ENCODE measurements at regions of chr22 and their contacts with region 1.

Region 1: GRCh38 chr22:43412808-43413795 is 1.3 kb downstream of the MPPED1 start:
- DNase-seq: no peak
- H3K4me3 ChIP-seq: no peak overlapping the region
- H3K27ac ChIP-seq: no peak overlapping the region
- H3K4me1 ChIP-seq: no peaks in the 10 kb centered on the region
- H3K27me3 ChIP-seq: peaks cover 90% of the 10 kb centered on the region
- CTCF ChIP-seq: no peak

Region 2: DNA sequence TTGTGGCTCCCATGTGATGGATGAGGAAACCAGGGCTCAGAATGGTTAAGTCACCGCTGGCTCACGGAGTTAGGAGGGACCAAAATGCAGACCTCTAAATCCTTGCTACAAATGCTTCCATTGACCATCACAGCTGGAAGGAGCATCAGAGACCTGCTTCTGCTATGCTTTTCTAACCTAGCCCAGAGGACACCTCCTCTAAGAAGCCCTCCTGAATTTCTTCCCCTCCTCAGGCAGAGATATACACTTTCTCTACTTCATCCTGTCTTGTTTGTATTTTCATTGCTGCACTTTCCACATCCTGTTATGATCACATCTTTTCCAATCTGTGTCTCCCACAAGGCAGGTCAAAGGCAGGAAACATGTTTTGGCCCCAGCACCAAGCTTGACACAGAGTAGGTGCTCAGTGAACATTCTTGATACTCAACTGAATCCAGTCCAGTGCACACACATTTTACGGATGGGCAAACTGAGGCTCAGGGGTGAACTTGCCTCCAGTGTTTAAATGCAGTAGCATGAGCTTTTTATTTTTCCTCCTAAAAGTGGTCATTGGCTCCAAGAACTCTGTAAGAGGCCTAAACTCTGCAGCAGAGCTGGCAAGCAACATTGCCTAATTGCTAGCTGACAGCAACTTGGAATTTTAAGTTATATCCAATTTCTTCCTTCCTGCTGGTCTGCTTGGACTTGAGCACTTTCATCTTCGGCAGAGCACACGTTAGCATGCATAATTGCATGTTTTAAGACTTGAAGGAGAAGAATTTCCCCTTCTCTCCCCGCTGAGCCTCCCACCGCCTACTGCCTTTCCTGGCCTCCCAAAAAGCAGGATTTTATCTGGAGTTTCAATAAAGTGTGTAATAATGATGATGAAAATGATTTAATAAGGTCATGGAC is 82.7 kb before region 1 on chr22:
- CTCF ChIA-PET with region 1: no interaction called
- POLR2A ChIA-PET with region 1: no interaction called
- intact Hi-C with region 1: no loop called
- DNase-seq: no peak
- H3K4me3 ChIP-seq: no peak overlapping the region
- H3K27ac ChIP-seq: no peak overlapping the region
- H3K4me1 ChIP-seq: no peaks in the 10 kb centered on the region
- H3K27me3 ChIP-seq: peaks cover 96% of the 10 kb centered on the region
- CTCF ChIP-seq: no peak

Region 3: GRCh38 chr22:43897751-43898261 is 484.7 kb after region 1 on chr22:
- CTCF ChIA-PET with region 1: no interaction called
- POLR2A ChIA-PET with region 1: interaction called, 33 read pairs
- intact Hi-C with region 1: no loop called
- DNase-seq: peak; percentile 64 to 79
- H3K4me3 ChIP-seq: no peak overlapping the region
- H3K27ac ChIP-seq: peak overlapping the region; percentile 44
- H3K4me1 ChIP-seq: peaks cover 52% of the 10 kb centered on the region
- H3K27me3 ChIP-seq: no peaks in the 10 kb centered on the region
- CTCF ChIP-seq: no peak

Measured in PC-9 (cell line).